IMR-90 (cell line): ENCODE measurements at regions of chr7 and their contacts with region 1.

Region 1: DNA sequence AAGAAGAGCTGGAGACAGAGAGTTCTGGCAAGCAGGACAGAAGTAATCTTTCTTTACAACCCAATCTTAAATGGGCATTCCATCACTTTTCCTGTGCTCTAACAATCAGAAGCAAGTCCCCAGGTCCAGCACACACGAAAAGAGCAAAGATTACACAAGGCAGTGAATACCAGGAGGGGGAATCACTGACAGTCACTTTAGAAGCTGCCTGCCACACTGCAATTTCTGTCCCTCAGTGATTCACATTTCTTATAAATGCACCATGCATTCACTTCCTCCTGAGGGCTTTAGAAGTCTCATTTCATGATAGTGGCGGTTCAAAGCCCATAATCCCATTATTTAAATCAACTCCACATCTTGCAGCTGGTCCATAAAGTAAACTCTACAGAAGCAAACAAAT is 362.5 kb downstream of the POM121L12 start:
- DNase-seq: no peak
- ATAC-seq: no peak
- H3K4me3 ChIP-seq: no peak overlapping the region
- H3K27ac ChIP-seq: no peak overlapping the region
- H3K4me1 ChIP-seq: no peaks in the 10 kb centered on the region
- H3K27me3 ChIP-seq: no peaks in the 10 kb centered on the region
- CTCF ChIP-seq: no peak
- POLR2A ChIP-seq: no peak
- RAD21 ChIP-seq: no peak

Region 2: DNA sequence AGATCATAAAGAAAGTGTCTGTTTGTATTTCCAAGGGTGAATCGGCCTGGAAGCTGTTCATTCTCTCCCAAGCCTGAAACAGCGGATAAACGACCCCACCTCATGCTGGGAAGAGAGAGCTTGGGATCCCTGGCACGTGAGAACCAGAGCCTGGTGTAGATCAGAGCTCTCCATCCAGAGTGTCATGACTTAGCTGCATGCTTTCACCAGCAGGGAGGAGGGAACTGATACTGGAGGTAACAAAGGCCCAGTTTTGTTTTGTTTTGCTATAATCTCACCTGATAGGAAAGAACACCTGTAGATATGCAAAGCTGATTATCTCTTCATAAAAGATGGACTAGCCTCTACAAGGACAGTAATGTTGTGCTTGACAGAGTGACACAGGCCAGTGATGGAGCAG is 125.8 kb before region 1 on chr7:
- CTCF ChIA-PET with region 1: no interaction called
- POLR2A ChIA-PET with region 1: no interaction called
- dilution Hi-C with region 1: no loop called
- in situ Hi-C with region 1: no loop called
- intact Hi-C with region 1: no loop called
- DNase-seq: no peak
- ATAC-seq: no peak
- H3K4me3 ChIP-seq: no peak overlapping the region
- H3K27ac ChIP-seq: no peak overlapping the region
- H3K4me1 ChIP-seq: no peaks in the 10 kb centered on the region
- H3K27me3 ChIP-seq: no peaks in the 10 kb centered on the region
- CTCF ChIP-seq: no peak
- POLR2A ChIP-seq: no peak
- RAD21 ChIP-seq: no peak

Region 3: GRCh38 chr7:53358269-53358668 is 39.6 kb before region 1 on chr7:
- CTCF ChIA-PET with region 1: no interaction called
- POLR2A ChIA-PET with region 1: no interaction called
- dilution Hi-C with region 1: no loop called
- in situ Hi-C with region 1: no loop called
- intact Hi-C with region 1: no loop called
- DNase-seq: no peak
- ATAC-seq: no peak
- H3K4me3 ChIP-seq: no peak overlapping the region
- H3K27ac ChIP-seq: no peak overlapping the region
- H3K4me1 ChIP-seq: no peaks in the 10 kb centered on the region
- H3K27me3 ChIP-seq: no peaks in the 10 kb centered on the region
- CTCF ChIP-seq: no peak
- POLR2A ChIP-seq: no peak
- RAD21 ChIP-seq: no peak

Region 4: DNA sequence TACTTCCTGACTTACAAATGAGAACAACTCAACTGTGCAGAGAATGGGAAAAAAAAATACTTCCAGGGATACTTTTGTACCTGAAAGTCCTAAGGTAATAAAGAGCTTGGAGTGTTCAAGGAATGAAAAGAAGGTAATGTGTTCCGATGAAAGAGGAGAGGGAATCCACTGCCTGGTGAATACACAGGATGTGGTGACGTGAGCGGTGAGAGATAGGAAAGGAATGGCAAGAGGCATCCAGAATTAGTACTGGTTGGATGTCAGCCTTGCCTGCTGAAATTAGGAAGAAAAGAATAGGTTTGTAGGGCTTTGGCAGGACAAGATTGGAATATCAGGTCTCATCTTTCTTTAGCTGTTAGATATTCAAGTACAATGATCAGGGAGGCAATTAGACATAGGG is 14.8 kb before region 1 on chr7:
- CTCF ChIA-PET with region 1: no interaction called
- POLR2A ChIA-PET with region 1: interaction called, 12 read pairs
- dilution Hi-C with region 1: no loop called
- in situ Hi-C with region 1: no loop called
- intact Hi-C with region 1: no loop called
- DNase-seq: no peak
- ATAC-seq: no peak
- H3K4me3 ChIP-seq: no peak overlapping the region
- H3K27ac ChIP-seq: no peak overlapping the region
- H3K4me1 ChIP-seq: no peaks in the 10 kb centered on the region
- H3K27me3 ChIP-seq: no peaks in the 10 kb centered on the region
- CTCF ChIP-seq: no peak
- POLR2A ChIP-seq: no peak
- RAD21 ChIP-seq: no peak

Region 5: GRCh38 chr7:53418834-53419482 is 21.0 kb after region 1 on chr7:
- CTCF ChIA-PET with region 1: no interaction called
- POLR2A ChIA-PET with region 1: no interaction called
- dilution Hi-C with region 1: no loop called
- in situ Hi-C with region 1: no loop called
- intact Hi-C with region 1: no loop called
- DNase-seq: no peak
- ATAC-seq: no peak
- H3K4me3 ChIP-seq: no peak overlapping the region
- H3K27ac ChIP-seq: no peak overlapping the region
- H3K4me1 ChIP-seq: no peaks in the 10 kb centered on the region
- H3K27me3 ChIP-seq: no peaks in the 10 kb centered on the region
- CTCF ChIP-seq: no peak
- POLR2A ChIP-seq: no peak
- RAD21 ChIP-seq: no peak

Region 6: DNA sequence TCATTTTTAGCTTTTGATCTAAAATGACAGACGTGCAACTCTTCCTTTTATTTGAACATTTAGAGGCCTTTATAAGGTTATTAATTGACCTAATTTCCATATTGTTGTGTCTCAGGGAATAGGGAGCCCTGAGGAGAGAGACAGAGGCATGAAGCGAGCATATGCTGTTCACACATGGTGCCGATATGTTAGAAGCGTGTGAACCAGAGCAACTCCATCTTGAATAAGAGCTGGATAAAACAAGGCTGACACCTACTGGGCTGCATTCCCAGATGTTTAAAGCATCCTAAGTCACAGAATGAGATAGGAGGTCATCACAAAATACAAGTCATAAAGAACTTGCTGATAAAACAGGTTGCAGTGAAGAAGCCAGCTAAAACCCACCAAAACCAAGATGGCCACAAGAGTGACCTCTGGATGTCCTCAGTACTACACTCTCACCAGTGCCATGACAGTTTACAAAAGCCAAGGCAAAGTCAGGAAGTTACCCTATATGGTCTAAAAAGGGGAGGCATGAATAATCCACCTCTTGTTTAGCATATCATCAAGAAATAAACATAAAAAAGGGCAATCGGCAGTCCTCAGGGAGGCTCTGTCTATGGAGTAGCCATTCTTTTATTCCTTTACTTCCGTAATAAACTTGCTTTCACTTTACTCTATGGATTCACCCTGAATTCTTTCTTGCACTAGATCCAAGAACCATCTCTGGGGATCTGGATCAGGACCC is 1281.0 kb after region 1 on chr7:
- CTCF ChIA-PET with region 1: no interaction called
- POLR2A ChIA-PET with region 1: no interaction called
- dilution Hi-C with region 1: no loop called
- in situ Hi-C with region 1: no loop called
- intact Hi-C with region 1: no loop called
- DNase-seq: no peak
- ATAC-seq: no peak
- H3K4me3 ChIP-seq: no peak overlapping the region
- H3K27ac ChIP-seq: no peak overlapping the region
- H3K4me1 ChIP-seq: no peaks in the 10 kb centered on the region
- H3K27me3 ChIP-seq: no peaks in the 10 kb centered on the region
- CTCF ChIP-seq: no peak
- POLR2A ChIP-seq: no peak
- RAD21 ChIP-seq: no peak